Right cardiac atrium (tissue), 5 donors: ENCODE measurements at regions of chr17 and their contacts with region 1.

Region 1: GRCh38 chr17:27879987-27880608 is 13.1 kb downstream of the LYRM9 start:
- DNase-seq: peak; percentile 70 to 86 (median 79)
- ATAC-seq: peak; percentile 91 to 92
- H3K4me3 ChIP-seq: no peak overlapping the region
- H3K27ac ChIP-seq: no peak overlapping the region
- H3K4me1 ChIP-seq: no peaks in the 10 kb centered on the region
- H3K27me3 ChIP-seq: no peaks in the 10 kb centered on the region

Region 2: GRCh38 chr17:27666831-27667560 is 213.1 kb before region 1 on chr17:
- intact Hi-C with region 1: loop called in 1 of 4 experiments (anchors 10 kb)
- DNase-seq: no peak
- ATAC-seq: no peak
- H3K4me3 ChIP-seq: no peak overlapping the region
- H3K27ac ChIP-seq: no peak overlapping the region
- H3K4me1 ChIP-seq: no peaks in the 10 kb centered on the region
- H3K27me3 ChIP-seq: no peaks in the 10 kb centered on the region

Region 3: GRCh38 chr17:27760069-27760885 is 119.8 kb before region 1 on chr17:
- intact Hi-C with region 1: loop called in 2 of 4 experiments (anchors 5 kb)
- DNase-seq: peak; percentile 55 to 87 (median 86)
- ATAC-seq: peak in 1 of 2 donors; percentile 55
- H3K4me3 ChIP-seq: no peak overlapping the region
- H3K27ac ChIP-seq: no peak overlapping the region
- H3K4me1 ChIP-seq: no peaks in the 10 kb centered on the region
- H3K27me3 ChIP-seq: no peaks in the 10 kb centered on the region

Region 4: GRCh38 chr17:27805520-27806146 is 74.5 kb before region 1 on chr17:
- intact Hi-C with region 1: loop called (anchors 5 kb)
- DNase-seq: peak; percentile 81 to 88 (median 84)
- ATAC-seq: peak; percentile 90 to 95
- H3K4me3 ChIP-seq: peak overlapping the region; percentile 21
- H3K27ac ChIP-seq: no peak overlapping the region
- H3K4me1 ChIP-seq: peaks cover 2% of the 10 kb centered on the region
- H3K27me3 ChIP-seq: no peaks in the 10 kb centered on the region